ENCODE measurements at regions of chr3 and their contacts with region 1.

Region 1: GRCh38 chr3:78659386-78659987 is 1108.3 kb downstream of the ROBO1 start:
- DNase-seq: peak; percentile 56
- ATAC-seq: no peak
- H3K4me3 Mint-ChIP-seq: no peak overlapping the region
- H3K27ac Mint-ChIP-seq: no peak overlapping the region
- H3K4me1 Mint-ChIP-seq: no peaks in the 10 kb centered on the region
- H3K27me3 Mint-ChIP-seq: no peaks in the 10 kb centered on the region
- CTCF ChIP-seq: peak; percentile 77

Region 2: DNA sequence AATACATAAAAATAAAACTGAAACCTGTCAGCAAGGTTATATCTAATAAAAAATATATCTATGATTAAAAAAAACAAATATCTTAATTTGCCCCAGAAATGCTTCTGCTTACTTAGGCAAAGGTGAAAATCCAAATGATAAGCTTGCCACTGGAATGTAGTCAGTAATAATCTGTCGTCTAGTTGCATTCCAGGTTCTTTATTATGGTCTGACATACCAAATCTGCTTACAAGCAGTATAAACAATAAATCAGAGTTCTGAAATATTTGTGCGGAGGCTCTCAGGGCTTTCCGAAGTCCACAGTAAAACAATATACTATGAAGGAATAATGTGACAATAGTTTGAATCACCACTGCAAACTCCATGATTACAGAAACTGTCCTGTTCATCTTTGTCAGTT is 25.2 kb before region 1 on chr3:
- CTCF ChIA-PET with region 1: no interaction called
- POLR2A ChIA-PET with region 1: no interaction called
- intact Hi-C with region 1: no loop called
- DNase-seq: no peak
- ATAC-seq: no peak
- H3K4me3 Mint-ChIP-seq: no peak overlapping the region
- H3K27ac Mint-ChIP-seq: no peak overlapping the region
- H3K4me1 Mint-ChIP-seq: no peaks in the 10 kb centered on the region
- H3K27me3 Mint-ChIP-seq: no peaks in the 10 kb centered on the region
- CTCF ChIP-seq: no peak

Region 3: GRCh38 chr3:78690766-78691165 is 31.3 kb after region 1 on chr3:
- CTCF ChIA-PET with region 1: no interaction called
- POLR2A ChIA-PET with region 1: no interaction called
- intact Hi-C with region 1: no loop called
- DNase-seq: no peak
- ATAC-seq: no peak
- H3K4me3 Mint-ChIP-seq: no peak overlapping the region
- H3K27ac Mint-ChIP-seq: no peak overlapping the region
- H3K4me1 Mint-ChIP-seq: no peaks in the 10 kb centered on the region
- H3K27me3 Mint-ChIP-seq: no peaks in the 10 kb centered on the region
- CTCF ChIP-seq: no peak

Region 4: GRCh38 chr3:78804251-78805037 is 145.0 kb after region 1 on chr3:
- CTCF ChIA-PET with region 1: no interaction called
- POLR2A ChIA-PET with region 1: no interaction called
- intact Hi-C with region 1: no loop called
- DNase-seq: no peak
- ATAC-seq: no peak
- H3K4me3 Mint-ChIP-seq: no peak overlapping the region
- H3K27ac Mint-ChIP-seq: no peak overlapping the region
- H3K4me1 Mint-ChIP-seq: peaks cover 3% of the 10 kb centered on the region
- H3K27me3 Mint-ChIP-seq: no peaks in the 10 kb centered on the region
- CTCF ChIP-seq: no peak

Region 5: GRCh38 chr3:79019137-79019923 is 359.8 kb after region 1 on chr3:
- CTCF ChIA-PET with region 1: no interaction called
- POLR2A ChIA-PET with region 1: no interaction called
- intact Hi-C with region 1: loop called (anchors 5 kb)
- DNase-seq: peak; percentile 50
- ATAC-seq: peak; percentile 49
- H3K4me3 Mint-ChIP-seq: no peak overlapping the region
- H3K27ac Mint-ChIP-seq: peak overlapping the region; percentile 52
- H3K4me1 Mint-ChIP-seq: peaks cover 6% of the 10 kb centered on the region
- H3K27me3 Mint-ChIP-seq: peaks cover 8% of the 10 kb centered on the region
- CTCF ChIP-seq: no peak

Region 6: DNA sequence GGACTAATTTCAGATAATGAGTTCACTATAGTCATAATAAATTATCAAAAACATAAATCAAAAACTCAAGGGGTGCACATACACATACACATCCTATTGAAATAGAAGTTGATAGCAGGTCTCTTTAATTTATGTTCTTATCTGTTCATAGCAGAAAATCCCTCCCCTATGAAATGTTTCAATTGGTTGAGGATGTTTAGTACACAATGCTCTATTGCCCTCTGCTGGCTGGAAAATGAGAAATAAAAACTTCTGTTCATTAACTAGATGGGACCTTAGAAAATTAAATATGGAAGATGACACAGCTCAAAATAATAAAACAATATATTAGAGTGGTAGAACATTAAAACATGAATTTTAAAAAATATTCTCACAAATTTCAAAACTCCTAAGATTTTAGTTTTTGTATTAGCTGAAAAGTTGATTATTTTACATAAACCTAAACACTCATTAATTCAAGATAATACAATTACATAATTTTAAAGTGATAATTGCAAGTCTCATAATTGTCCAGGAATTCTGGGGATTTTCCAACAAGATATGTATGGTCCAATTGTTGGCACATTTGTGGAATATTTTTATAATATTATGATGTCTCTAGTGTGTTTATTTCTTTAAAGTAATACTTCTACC is 373.3 kb after region 1 on chr3:
- CTCF ChIA-PET with region 1: interaction called, 16 read pairs
- POLR2A ChIA-PET with region 1: no interaction called
- intact Hi-C with region 1: loop called (anchors 2 kb)
- DNase-seq: peak; percentile 5
- ATAC-seq: no peak
- H3K4me3 Mint-ChIP-seq: no peak overlapping the region
- H3K27ac Mint-ChIP-seq: no peak overlapping the region
- H3K4me1 Mint-ChIP-seq: no peaks in the 10 kb centered on the region
- H3K27me3 Mint-ChIP-seq: peaks cover 2% of the 10 kb centered on the region
- CTCF ChIP-seq: peak; percentile 38

Region 7: DNA sequence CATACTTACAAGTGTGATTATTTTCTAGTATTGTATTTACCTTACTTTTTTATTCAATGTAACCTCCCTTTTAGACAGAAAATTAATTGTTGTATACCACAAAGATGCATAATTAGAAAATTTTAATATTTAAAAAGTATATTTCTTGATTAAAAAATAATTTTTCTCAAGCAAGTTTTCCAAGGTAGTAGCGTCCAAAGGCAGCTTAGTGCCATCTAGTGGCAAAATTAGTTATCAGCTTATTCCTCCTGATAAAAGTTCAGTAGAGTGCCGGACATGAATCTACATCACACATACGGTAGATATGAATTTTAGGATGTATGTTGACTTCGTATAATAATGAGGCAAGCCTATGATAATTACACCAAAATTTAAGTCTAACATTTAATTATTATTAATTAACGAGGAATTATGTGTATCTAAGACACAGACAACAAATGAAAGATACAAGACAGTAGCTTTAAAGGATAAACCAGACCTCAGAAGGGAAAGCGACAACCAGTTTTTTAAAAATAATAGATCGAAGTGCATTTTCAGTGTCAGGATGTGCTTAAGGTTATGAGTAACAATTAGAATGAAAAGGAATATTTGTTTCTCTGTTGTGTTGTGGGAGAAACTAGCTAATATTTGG is 702.4 kb after region 1 on chr3:
- CTCF ChIA-PET with region 1: no interaction called
- POLR2A ChIA-PET with region 1: no interaction called
- intact Hi-C with region 1: loop called (anchors 5 kb)
- DNase-seq: no peak
- ATAC-seq: no peak
- H3K4me3 Mint-ChIP-seq: no peak overlapping the region
- H3K27ac Mint-ChIP-seq: no peak overlapping the region
- H3K4me1 Mint-ChIP-seq: no peaks in the 10 kb centered on the region
- H3K27me3 Mint-ChIP-seq: no peaks in the 10 kb centered on the region
- CTCF ChIP-seq: peak; percentile 68

Region 8: DNA sequence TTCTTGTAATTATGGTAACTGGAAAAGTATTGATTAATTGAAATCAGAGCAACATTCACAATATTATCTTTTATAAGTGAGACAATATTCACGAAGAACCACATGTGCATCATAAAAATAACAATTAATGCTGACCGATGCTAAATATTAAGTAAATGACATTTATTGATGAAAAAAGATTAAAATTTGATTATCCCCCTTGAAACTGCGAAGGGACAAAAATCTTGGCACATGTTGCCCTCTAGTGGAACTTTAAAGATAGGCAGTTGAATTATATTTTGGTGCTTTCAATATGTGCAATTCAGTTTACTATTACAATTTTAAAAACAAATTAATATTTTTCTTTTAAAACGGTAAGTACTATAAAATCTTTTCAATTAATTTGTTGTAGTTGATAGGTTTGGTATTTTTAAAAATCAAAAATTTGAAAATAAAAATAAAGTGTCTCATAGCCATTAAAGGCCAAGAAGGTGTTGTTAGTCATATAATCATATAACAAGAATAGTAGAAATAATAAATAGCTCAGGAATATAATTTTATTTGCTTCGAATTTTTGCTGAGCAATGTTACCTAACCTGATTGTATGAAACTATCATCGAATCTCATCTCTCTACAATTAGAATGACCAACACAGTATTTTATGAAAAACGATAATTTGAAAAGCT is 838.1 kb after region 1 on chr3:
- CTCF ChIA-PET with region 1: no interaction called
- POLR2A ChIA-PET with region 1: no interaction called
- intact Hi-C with region 1: loop called (anchors 10 kb)
- DNase-seq: no peak
- ATAC-seq: no peak
- H3K4me3 Mint-ChIP-seq: no peak overlapping the region
- H3K27ac Mint-ChIP-seq: no peak overlapping the region
- H3K4me1 Mint-ChIP-seq: no peaks in the 10 kb centered on the region
- H3K27me3 Mint-ChIP-seq: no peaks in the 10 kb centered on the region
- CTCF ChIP-seq: peak; percentile 50